Caco-2 (cell line): ENCODE measurements at regions of chr2 and their contacts with region 1.

Region 1: DNA sequence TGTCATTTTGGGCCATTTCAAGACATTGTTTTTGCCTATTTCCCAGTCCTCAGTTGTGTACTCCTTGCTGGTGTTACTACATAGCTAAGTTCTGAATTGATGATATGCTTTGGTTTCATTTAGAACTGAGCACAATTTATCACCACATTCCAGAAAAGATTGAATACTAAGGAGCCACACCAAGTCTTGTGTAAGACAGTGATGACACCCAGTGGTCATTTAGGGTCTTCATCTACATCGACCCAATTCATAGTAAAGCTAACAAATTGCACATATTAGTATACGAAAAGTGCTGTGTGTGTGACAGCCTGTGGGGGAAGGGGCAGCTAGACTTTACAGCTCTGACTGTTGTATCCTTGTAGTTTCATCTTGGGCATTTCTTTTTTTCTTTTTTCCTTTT is 10.9 kb upstream of the DLX2 start:
- DNase-seq: no peak
- H3K4me3 ChIP-seq: no peak overlapping the region
- H3K4me3 Mint-ChIP-seq: no peak overlapping the region
- H3K27ac Mint-ChIP-seq: no peak overlapping the region
- H3K4me1 ChIP-seq: peaks cover 10% of the 10 kb centered on the region
- H3K4me1 Mint-ChIP-seq: peaks cover 9% of the 10 kb centered on the region
- H3K27me3 ChIP-seq: no peaks in the 10 kb centered on the region
- H3K27me3 Mint-ChIP-seq: no peaks in the 10 kb centered on the region
- CTCF ChIP-seq: peak; percentile 20 to 30

Region 2: DNA sequence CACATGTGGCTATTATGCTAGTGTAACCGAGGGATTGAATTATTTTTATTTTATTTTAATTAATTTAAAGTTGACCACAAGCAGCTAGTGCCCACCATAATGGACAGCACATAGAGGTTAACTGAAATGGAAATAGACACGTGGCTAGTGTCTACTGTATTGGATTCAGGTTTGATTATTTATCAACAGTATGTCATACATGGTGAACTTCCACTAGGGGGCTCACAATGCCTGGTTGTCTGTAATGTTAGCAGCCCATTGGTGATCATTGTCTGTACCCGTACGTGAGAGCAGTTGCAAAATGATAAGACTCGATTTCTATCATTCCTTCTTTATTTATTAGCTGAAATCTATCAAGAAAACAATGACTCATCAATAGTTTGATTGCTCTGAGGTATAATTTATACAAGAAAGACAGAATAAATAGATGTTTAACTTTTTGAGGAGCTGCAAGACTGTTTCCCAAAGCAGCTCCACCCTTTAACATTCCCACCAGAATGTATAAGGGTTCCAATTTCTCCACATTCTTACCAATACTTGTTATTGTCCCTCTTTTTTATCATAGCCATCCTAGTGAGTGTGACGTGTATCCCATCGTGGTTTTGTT is 514.8 kb before region 1 on chr2:
- CTCF ChIA-PET with region 1: interaction called, 7 read pairs
- POLR2A ChIA-PET with region 1: no interaction called
- intact Hi-C with region 1: loop called (anchors 2 kb)
- DNase-seq: peak; percentile 60 to 68
- H3K4me3 ChIP-seq: no peak overlapping the region
- H3K4me3 Mint-ChIP-seq: no peak overlapping the region
- H3K27ac Mint-ChIP-seq: no peak overlapping the region
- H3K4me1 ChIP-seq: no peaks in the 10 kb centered on the region
- H3K4me1 Mint-ChIP-seq: peaks cover 6% of the 10 kb centered on the region
- H3K27me3 ChIP-seq: no peaks in the 10 kb centered on the region
- H3K27me3 Mint-ChIP-seq: peaks cover 10% of the 10 kb centered on the region
- CTCF ChIP-seq: peak; percentile 80 to 85

Region 3: GRCh38 chr2:172131713-172132555 is 18.3 kb after region 1 on chr2:
- CTCF ChIA-PET with region 1: interaction called, 27 read pairs
- POLR2A ChIA-PET with region 1: no interaction called
- intact Hi-C with region 1: loop called (anchors 1 kb)
- DNase-seq: no peak
- H3K4me3 ChIP-seq: no peak overlapping the region
- H3K4me3 Mint-ChIP-seq: no peak overlapping the region
- H3K27ac Mint-ChIP-seq: no peak overlapping the region
- H3K4me1 ChIP-seq: no peaks in the 10 kb centered on the region
- H3K4me1 Mint-ChIP-seq: no peaks in the 10 kb centered on the region
- H3K27me3 ChIP-seq: no peaks in the 10 kb centered on the region
- H3K27me3 Mint-ChIP-seq: peaks cover 7% of the 10 kb centered on the region
- CTCF ChIP-seq: no peak